ENCODE measurements at regions of chr14 and their contacts with region 1.

Region 1: GRCh38 chr14:102437997-102438915 is 71.3 kb downstream of the ANKRD9 start:
- DNase-seq: peak; percentile 48
- H3K4me3 ChIP-seq: peak overlapping the region; percentile 29; the same call in 1 of the 2 replicates
- H3K27ac ChIP-seq: no peak overlapping the region
- H3K27me3 ChIP-seq: no peaks in the 10 kb centered on the region
- CTCF ChIP-seq: peak; percentile 75

Region 2: DNA sequence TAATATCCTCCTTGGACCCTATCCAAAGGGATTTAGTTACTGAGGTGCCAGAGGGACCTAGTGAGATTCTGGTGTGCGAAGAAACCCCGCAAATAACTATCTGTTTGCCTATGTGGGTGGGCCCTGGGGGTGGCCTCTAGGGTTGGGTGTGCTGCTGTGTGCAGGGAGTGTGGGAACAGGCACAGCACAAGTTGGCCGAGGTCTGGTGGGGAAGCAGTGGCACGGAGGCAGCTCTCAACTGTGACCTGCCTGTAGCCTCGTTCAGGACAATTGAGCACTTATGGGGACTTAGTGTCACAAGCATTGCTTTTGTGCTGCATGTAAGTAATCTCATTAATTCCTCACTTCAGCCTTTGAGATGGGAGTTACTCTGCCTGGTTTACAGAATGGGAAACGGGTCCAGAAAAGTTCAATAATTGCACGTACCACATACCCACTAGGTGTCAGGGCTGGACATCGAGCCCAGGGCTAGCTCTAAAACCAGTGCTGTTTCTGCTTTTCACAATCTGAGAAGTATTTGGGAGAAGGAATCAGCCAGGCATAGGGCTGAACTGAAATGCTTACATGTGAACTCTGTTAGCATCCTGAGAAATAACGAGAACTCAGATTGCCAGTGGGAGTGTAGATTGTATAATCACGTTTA is 16.7 kb before region 1 on chr14:
- CTCF ChIA-PET with region 1: interaction called, 18 read pairs
- POLR2A ChIA-PET with region 1: no interaction called
- DNase-seq: no peak
- H3K4me3 ChIP-seq: no peak overlapping the region
- H3K27ac ChIP-seq: no peak overlapping the region
- H3K27me3 ChIP-seq: no peaks in the 10 kb centered on the region
- CTCF ChIP-seq: no peak

Region 3: DNA sequence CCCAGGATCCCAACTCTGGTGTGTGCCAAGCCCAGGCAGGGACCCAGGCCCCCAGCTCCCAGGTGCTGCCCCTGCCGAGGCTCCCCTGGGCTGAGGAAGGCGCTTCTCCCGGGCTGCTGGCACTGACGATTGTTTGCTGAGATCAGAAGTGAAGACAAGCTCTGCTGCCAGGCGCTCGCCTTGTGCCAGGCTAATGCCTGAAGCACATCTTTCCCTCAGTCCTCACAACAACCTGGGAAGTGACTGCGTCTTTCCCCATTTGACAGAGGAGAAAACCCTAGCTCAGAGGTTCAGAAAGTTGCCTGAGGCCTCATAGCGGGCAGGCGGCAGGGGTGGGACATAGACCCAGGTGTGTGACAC is 34.5 kb after region 1 on chr14:
- CTCF ChIA-PET with region 1: interaction called, 11 read pairs
- POLR2A ChIA-PET with region 1: no interaction called
- DNase-seq: no peak
- H3K4me3 ChIP-seq: no peak overlapping the region
- H3K27ac ChIP-seq: no peak overlapping the region
- H3K27me3 ChIP-seq: no peaks in the 10 kb centered on the region
- CTCF ChIP-seq: no peak

Region 4: DNA sequence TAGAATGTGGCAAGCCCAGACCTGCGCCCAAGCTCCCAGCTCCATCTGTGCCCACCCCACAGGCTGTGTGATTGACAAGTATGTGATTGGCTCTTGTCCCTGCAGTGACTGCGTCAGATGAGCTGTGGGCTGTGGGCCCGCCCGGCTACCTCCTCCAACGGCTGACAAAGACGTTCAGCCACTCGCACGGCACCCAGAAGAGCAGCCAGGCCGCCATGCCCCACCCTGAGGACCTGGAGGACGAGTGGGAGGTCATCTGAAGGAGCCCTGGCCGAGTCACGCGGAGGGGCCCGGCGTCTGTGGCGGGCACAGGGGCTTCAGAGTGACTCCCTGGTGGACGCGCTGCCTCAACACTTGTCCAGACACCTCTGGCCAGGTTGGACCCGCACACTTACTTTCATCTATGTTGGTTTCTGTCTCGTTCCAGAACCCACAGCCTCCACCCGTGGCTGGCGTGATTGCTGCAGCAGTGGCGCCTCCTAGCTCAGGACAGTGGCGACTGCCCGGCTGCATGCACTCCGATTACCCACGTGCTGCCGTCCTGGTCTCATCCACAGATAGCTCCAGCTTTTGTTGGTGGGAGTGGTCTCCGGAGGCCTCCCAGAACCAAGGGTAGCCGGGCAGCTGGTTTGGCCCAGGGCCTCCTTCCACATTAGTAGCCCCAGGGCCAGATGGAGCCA is 59.9 kb after region 1 on chr14:
- CTCF ChIA-PET with region 1: interaction called, 12 read pairs
- POLR2A ChIA-PET with region 1: no interaction called
- DNase-seq: no peak
- H3K4me3 ChIP-seq: no peak overlapping the region
- H3K27ac ChIP-seq: no peak overlapping the region
- H3K27me3 ChIP-seq: no peaks in the 10 kb centered on the region
- CTCF ChIP-seq: 0 out of 2 replicates have a peak, but pooled peaks have one; percentile 8

Region 5: DNA sequence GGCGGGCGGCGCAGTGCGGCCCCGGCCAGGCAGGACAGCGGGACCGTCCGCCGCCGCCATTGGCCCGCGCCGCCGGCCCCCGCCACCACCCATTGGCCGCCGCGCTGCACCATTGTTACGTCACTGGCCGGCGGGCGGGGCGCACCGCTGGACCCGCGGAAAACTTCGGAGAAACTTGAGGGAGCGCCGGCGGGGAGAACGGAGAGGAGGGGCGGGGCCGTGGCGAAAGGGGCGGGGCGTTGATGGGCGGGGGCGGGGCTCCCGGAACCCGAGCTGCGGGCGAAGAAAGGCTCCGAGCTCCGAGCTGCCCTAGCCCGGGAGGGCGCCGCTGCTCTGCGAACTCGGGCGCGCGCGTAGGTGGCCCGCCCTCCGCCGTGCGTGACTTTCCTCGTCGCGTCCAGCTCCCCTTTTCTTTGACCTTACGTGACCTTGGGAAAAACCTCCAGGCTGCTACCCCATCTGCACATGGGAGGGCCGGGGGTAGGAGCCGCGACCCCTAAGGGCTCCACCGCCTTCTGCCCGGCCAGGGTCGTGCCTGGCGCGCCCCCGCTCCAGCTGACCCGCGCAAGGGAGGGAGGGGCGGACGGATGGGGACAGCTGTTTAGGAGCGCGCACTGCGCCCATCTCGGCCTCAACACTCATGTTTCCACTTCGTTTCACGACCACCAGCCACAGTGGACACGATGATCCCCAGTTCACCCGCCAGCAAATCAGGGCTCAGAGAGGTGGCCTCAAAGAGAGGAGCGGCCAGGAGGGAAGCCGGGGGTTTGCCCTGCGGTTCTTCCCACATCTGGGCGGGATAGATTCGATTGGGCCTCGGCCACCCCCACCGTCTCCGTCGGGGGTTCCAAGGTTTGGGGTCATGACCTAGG is 71.7 kb after region 1 on chr14 and contains the start of gene ANKRD9:
- CTCF ChIA-PET with region 1: interaction called, 45 read pairs
- POLR2A ChIA-PET with region 1: no interaction called
- DNase-seq: peak; percentile 77
- H3K4me3 ChIP-seq: peak within 1 kb of the TSS; percentile 67
- H3K27ac ChIP-seq: peak within 1 kb of the TSS; percentile 39
- H3K27me3 ChIP-seq: no peaks in the 10 kb centered on the region
- CTCF ChIP-seq: no peak
- polyA plus RNA-seq, gene ANKRD9: 4.0 and 5.8 TPM in 2 replicates

Region 6: GRCh38 chr14:102516531-102517415 is 78.5 kb after region 1 on chr14:
- CTCF ChIA-PET with region 1: interaction called, 45 read pairs
- POLR2A ChIA-PET with region 1: no interaction called
- DNase-seq: no peak
- H3K4me3 ChIP-seq: peak overlapping the region; percentile 64
- H3K27ac ChIP-seq: no peak overlapping the region
- H3K27me3 ChIP-seq: no peaks in the 10 kb centered on the region
- CTCF ChIP-seq: peak; percentile 55

Region 7: GRCh38 chr14:102524466-102525218 is 86.4 kb after region 1 on chr14:
- CTCF ChIA-PET with region 1: interaction called, 16 read pairs
- POLR2A ChIA-PET with region 1: no interaction called
- DNase-seq: peak; percentile 95
- H3K4me3 ChIP-seq: peak overlapping the region; percentile 65
- H3K27ac ChIP-seq: peak overlapping the region; percentile 61
- H3K27me3 ChIP-seq: no peaks in the 10 kb centered on the region
- CTCF ChIP-seq: peak; percentile 94

Region 8: GRCh38 chr14:102555264-102555831 is 117.1 kb after region 1 on chr14:
- CTCF ChIA-PET with region 1: no interaction called
- POLR2A ChIA-PET with region 1: no interaction called
- DNase-seq: no peak
- H3K4me3 ChIP-seq: peak overlapping the region; percentile 59
- H3K27ac ChIP-seq: no peak overlapping the region
- H3K27me3 ChIP-seq: no peaks in the 10 kb centered on the region
- CTCF ChIP-seq: no peak

Region 9: GRCh38 chr14:103295972-103296371 is 857.7 kb after region 1 on chr14:
- CTCF ChIA-PET with region 1: no interaction called
- POLR2A ChIA-PET with region 1: no interaction called
- DNase-seq: no peak
- H3K4me3 ChIP-seq: no peak overlapping the region
- H3K27ac ChIP-seq: no peak overlapping the region
- H3K27me3 ChIP-seq: peaks cover 27% of the 10 kb centered on the region
- CTCF ChIP-seq: no peak

Measured in AG04450 (cell line).